Activated CD4-positive, alpha-beta T cell treated with anti-CD3 and anti-CD28 coated beads for 36 hours (primary cell): ENCODE measurements at regions of chr7 and their contacts with region 1.

Region 1: GRCh38 chr7:132318352-132319318 is 257.6 kb downstream of the PLXNA4 start:
- DNase-seq: peak; percentile 88
- ATAC-seq: peak; percentile 95
- H3K4me3 Mint-ChIP-seq: peak overlapping the region; percentile 17
- H3K27ac Mint-ChIP-seq: no peak overlapping the region
- H3K4me1 Mint-ChIP-seq: peaks cover 10% of the 10 kb centered on the region
- H3K27me3 Mint-ChIP-seq: peaks cover 35% of the 10 kb centered on the region

Region 2: DNA sequence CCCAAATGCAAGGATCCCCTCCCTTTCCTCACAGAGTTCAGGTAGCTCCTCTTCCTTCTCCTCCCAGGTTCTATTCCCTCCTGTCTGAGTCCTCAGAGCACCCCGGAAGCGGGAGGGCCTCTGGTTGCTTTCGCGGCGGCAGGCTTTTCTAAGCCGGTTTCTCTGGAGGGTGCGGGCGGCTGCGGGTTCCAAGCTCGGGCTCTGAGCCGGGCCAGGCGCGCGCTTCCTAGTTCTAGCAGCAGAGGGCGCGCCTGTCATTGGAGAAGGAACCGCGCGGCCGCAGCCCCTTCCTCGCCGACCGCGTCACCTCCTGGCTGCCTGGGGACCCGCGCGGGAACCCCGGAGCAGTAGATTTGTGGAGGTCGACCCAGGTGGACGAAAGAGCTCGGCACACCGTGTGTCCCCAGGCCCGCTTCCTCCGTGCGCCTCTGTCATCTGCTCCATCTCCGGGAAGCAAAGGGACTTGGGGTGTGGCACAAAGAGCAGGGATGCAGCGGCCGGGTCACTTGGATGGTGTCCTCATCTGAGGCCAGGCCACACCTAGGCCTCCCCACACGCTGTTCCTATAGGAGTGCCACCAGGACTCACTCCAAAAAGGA is 373.2 kb before region 1 on chr7:
- CTCF ChIA-PET with region 1: no interaction called
- POLR2A ChIA-PET with region 1: no interaction called
- intact Hi-C with region 1: no loop called
- DNase-seq: peak; percentile 69
- ATAC-seq: peak; percentile 64
- H3K4me3 Mint-ChIP-seq: no peak overlapping the region
- H3K27ac Mint-ChIP-seq: no peak overlapping the region
- H3K4me1 Mint-ChIP-seq: no peaks in the 10 kb centered on the region
- H3K27me3 Mint-ChIP-seq: peaks cover 36% of the 10 kb centered on the region

Region 3: GRCh38 chr7:132075515-132075914 is 243.1 kb before region 1 on chr7:
- CTCF ChIA-PET with region 1: no interaction called
- POLR2A ChIA-PET with region 1: no interaction called
- intact Hi-C with region 1: no loop called
- DNase-seq: no peak
- ATAC-seq: no peak
- H3K4me3 Mint-ChIP-seq: no peak overlapping the region
- H3K27ac Mint-ChIP-seq: no peak overlapping the region
- H3K4me1 Mint-ChIP-seq: no peaks in the 10 kb centered on the region
- H3K27me3 Mint-ChIP-seq: peaks cover 14% of the 10 kb centered on the region

Region 4: GRCh38 chr7:132250883-132251653 is 67.6 kb before region 1 on chr7:
- CTCF ChIA-PET with region 1: no interaction called
- POLR2A ChIA-PET with region 1: no interaction called
- intact Hi-C with region 1: no loop called
- DNase-seq: no peak
- ATAC-seq: no peak
- H3K4me3 Mint-ChIP-seq: no peak overlapping the region
- H3K27ac Mint-ChIP-seq: no peak overlapping the region
- H3K4me1 Mint-ChIP-seq: no peaks in the 10 kb centered on the region
- H3K27me3 Mint-ChIP-seq: peaks cover 13% of the 10 kb centered on the region

Region 5: DNA sequence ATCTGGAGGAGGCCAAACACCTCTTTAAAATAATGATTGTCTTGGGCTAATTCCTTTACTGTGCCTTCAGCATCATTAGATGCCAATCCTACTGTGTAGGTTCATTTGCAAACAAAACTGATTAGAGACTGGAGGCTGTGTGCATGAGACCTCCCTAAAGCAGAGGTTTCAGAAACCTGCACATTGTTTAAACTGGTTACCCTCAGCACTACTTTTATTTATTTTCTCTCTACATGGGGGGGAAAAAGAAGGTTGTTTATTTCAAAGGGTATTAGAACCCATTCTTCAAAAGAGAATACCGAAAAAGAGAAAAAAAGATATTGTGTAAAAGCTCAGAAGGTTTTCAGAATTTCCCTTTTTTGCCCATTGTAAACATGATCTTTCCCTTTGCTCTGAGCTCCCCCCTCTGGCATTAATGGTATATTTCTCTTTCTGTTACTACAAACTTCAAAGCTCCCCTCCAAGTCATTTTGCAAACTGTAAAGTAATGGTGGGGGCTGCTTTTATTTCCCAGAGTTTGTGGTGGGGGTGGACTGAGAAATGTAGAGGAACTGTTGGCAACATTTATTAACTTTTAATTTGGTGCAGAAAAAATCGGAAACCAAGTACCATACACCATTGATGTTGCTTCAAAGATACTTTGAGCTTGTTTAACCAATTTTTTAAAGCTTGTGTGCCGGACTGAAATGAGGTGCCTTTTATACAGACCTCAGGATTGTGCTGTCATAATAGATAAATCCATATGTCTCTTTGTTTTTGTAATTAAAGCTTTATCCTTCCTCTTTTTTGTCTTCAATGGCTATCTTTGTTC is 1115.6 kb after region 1 on chr7:
- CTCF ChIA-PET with region 1: no interaction called
- POLR2A ChIA-PET with region 1: no interaction called
- intact Hi-C with region 1: loop called (anchors 5 kb)
- DNase-seq: no peak
- ATAC-seq: no peak
- H3K4me3 Mint-ChIP-seq: no peak overlapping the region
- H3K27ac Mint-ChIP-seq: no peak overlapping the region
- H3K4me1 Mint-ChIP-seq: no peaks in the 10 kb centered on the region
- H3K27me3 Mint-ChIP-seq: no peaks in the 10 kb centered on the region